ENCODE measurements at regions of chr1 and their contacts with region 1.

Region 1: GRCh38 chr1:150186789-150187559 is 37.3 kb downstream of the PLEKHO1 start:
- DNase-seq: peak; percentile 28
- H3K4me3 Mint-ChIP-seq: no peak overlapping the region
- H3K27ac Mint-ChIP-seq: no peak overlapping the region
- H3K4me1 Mint-ChIP-seq: peaks cover 18% of the 10 kb centered on the region
- H3K27me3 Mint-ChIP-seq: peaks cover 21% of the 10 kb centered on the region

Region 2: GRCh38 chr1:149962123-149962548 is 224.8 kb before region 1 on chr1:
- CTCF ChIA-PET with region 1: interaction called, 18 read pairs
- DNase-seq: peak; percentile 57
- H3K4me3 Mint-ChIP-seq: no peak overlapping the region
- H3K27ac Mint-ChIP-seq: no peak overlapping the region
- H3K4me1 Mint-ChIP-seq: peaks cover 18% of the 10 kb centered on the region
- H3K27me3 Mint-ChIP-seq: no peaks in the 10 kb centered on the region

Region 3: DNA sequence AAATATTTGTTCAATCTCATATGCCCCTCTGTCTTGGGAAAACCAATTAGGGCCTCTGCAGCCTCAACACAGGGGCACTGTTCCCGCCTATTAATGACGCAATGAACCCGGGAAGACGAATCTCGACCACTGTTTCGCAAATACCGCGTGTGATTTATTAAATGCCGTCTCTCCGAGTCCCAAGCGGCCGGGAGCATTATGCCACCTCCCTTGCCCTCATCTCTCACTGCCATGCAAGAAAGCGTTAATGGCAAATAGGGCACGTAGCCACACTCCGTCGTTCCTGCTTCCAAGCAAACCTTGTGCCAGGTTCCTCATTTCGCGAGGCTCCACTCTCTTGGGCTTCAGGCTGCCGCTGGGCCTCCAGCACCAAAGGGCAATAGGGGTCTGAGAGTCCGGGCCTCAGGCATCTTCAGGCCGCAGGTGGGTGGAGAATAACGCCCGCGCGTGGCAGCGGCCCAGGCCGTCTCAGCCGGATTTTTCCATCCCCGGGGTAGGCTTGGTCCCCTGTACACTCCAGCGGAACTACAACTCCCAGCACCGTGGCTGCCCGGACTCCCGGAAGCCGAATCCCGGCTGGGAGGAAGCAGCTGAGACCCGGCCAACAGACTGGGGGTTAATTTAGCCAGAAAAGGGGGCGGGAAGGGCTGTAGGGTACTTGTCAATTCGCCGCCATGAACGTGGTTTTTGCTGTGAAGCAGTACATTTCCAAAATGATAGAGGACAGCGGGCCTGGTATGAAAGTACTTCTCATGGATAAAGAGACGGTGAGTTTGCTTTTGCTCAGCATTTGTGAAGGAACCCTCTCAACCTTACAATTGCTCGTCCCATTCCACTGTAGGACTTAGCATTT is 119.6 kb before region 1 on chr1 and contains the start of gene VPS45:
- CTCF ChIA-PET with region 1: interaction called, 10 read pairs
- DNase-seq: peak; percentile 90
- H3K4me3 Mint-ChIP-seq: peak within 1 kb of the TSS; percentile 88
- H3K27ac Mint-ChIP-seq: peak within 1 kb of the TSS; percentile 93
- H3K4me1 Mint-ChIP-seq: peaks cover 43% of the 10 kb centered on the region
- H3K27me3 Mint-ChIP-seq: peaks cover 9% of the 10 kb centered on the region

Region 4: DNA sequence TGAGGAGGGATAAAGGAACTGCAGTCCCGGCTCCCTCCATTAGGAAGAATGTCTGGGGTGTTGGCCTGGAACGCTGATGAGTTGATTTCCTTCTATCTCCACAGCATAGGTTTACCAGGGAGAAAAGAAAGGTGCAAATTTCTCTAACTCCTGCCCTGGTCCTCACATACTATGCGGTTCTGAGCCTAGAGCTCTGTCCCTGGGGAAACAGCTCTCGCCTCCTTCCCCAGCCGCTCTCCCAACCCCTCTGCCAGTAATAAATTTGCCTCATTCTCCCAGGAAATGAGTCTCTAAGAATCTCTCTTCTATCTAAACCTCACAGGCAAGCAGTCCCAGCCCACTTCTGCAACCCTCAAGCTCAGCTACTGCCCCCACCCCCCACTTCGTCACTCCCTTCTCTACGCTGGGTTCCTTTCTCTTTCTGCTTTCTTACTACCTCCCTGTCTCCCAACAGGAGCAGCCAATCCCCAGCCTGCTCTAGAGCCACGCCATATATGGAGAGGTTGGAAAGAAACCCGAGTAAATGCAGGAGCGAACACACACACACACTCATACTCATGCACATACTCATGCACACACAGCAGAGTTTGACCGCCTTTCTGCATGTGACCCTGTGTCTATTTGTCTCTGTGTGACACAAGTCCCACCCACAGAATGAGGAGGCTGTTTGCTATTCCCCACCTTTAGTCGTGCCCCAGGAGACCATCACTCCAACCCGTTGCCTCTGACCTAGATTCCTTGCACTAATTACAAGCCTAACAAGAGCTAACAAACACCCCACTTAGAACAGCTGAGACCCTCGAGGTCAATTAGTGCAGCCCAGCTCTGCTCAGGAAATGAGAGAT is 23.9 kb before region 1 on chr1:
- CTCF ChIA-PET with region 1: interaction called, 23 read pairs
- DNase-seq: no peak
- H3K4me3 Mint-ChIP-seq: no peak overlapping the region
- H3K27ac Mint-ChIP-seq: no peak overlapping the region
- H3K4me1 Mint-ChIP-seq: peaks cover 71% of the 10 kb centered on the region
- H3K27me3 Mint-ChIP-seq: no peaks in the 10 kb centered on the region

Region 5: GRCh38 chr1:150302338-150302737 is 115.4 kb after region 1 on chr1:
- CTCF ChIA-PET with region 1: no interaction called
- DNase-seq: no peak
- H3K4me3 Mint-ChIP-seq: no peak overlapping the region
- H3K27ac Mint-ChIP-seq: no peak overlapping the region
- H3K4me1 Mint-ChIP-seq: peaks cover 5% of the 10 kb centered on the region
- H3K27me3 Mint-ChIP-seq: no peaks in the 10 kb centered on the region

Measured in activated naive CD4-positive, alpha-beta T cell treated with anti-CD3 and anti-CD28 coated beads, Interleukin-2, amount 10 ng/mL, durations not matched to agents 7 days and 5 days (primary cell).